Right ventricle myocardium superior (tissue), 1 donor: ENCODE measurements at regions of chr14 and their contacts with region 1.

Region 1: DNA sequence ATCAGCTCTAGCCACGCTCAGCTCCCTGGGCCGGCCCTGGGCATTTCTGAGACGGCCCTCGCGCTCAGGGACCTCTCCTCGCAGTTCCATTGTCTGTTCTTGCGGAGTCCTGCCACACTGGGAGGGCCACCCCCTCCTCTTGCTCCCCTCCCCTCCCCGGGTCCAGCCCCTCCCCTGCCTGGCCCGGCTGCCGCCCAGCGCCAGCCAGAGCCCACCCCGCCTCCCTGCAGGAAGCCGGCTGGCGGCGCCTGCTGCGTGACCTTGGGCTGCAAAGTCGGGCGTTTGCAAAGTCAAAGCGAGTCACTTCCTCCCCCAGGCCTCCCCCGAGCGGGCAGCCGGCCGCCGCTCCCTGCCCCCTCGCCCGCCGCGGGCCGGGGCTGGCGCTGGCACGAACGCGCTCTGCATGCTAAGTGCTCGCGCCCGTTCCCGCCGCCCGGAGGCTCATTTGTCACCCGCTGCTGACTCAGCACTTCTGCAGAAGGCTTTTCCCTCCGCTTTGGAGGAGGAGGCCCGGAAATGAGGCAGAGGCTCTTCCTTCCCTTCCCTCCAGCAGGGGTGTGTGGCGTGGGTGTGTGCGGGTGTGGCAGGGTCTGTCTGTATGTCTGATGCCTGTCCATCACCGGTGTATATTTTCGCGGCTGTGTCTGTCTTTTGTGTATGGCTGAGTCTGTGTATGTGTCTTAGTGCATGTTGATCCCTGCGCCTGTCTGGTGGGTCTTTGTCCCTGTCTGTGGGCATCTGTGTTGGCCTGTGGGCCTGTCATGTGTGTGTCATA is 72.0 kb downstream of the IRF2BPL start:
- DNase-seq: peak; percentile 94
- ATAC-seq: peak; percentile 87

Region 2: DNA sequence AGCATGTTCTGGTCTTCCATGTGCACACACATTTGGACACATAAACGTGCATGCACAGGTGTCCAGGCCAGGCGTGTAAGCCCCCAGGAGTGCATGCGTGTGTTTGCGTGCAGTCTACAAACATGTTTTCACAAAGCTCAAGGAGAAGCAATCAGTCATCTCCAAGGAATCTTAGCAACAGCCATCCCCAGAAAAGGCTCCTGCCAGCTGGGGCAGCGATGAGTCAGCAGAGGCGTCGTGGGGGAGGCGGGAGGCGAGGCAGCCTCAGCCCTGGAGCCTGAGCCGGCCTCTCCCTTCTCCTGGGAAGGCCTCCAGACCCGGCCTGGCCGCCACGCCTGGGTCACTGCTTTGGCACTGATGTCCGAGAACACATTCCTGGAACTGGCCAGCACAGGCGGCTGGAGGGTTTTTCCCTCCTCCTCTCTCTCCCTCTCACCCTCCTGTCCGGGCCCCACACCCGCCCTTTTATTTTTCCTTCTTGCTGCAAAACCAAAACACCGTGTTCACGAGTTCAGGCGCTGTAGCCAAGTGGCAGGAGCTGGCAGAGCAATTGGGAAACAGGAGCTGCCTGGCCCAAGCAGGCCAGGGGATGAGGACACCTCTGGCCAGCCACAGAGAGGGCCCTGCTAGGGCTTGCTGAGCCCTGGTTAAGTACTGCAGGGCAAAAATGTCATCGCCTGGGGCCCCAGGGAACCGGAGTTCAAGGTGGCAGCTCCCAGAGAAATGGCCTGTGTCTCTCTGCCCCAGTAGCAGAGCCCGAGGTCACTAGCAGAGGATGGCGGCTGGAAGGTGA is 37.6 kb before region 1 on chr14:
- intact Hi-C with region 1: loop called (anchors 2 kb)
- DNase-seq: peak; percentile 96
- ATAC-seq: peak; percentile 87

Region 3: GRCh38 chr14:77028384-77029231 is 72.1 kb after region 1 on chr14 and contains the start of gene IRF2BPL:
- intact Hi-C with region 1: loop called (anchors 5 kb)
- DNase-seq: peak; percentile 99
- ATAC-seq: peak; percentile 68
- total RNA-seq, gene IRF2BPL: 38.8 TPM

Region 4: GRCh38 chr14:77044783-77045237 is 88.3 kb after region 1 on chr14:
- intact Hi-C with region 1: loop called (anchors 5 kb)
- DNase-seq: peak; percentile 67
- ATAC-seq: peak; percentile 16